Calu3 (cell line): ENCODE measurements at regions of chr11 and their contacts with region 1.

Region 1: DNA sequence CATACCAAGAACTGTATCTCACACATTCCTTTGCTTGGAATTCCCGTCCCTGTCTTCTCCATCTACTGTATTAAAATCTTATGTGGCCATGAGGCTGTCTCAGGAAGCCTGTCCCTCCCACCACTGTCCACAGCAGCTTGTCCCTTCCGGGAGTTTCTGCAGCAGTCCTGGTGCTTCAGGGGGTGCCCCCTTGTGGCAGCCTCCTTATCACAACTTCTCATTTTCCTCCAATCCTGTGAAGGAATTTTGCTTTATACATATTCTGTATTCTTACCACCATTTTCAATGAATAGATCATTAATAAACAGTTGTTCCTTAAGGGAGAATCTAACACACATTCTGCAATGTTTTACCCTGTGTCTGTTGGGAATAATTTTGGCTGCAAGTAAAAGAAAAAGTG is 220.4 kb upstream of the RAG2 start:
- DNase-seq: peak; percentile 89
- H3K4me3 Mint-ChIP-seq: peak overlapping the region; percentile 45
- H3K27ac Mint-ChIP-seq: peak overlapping the region; percentile 79
- H3K4me1 Mint-ChIP-seq: peaks cover 31% of the 10 kb centered on the region
- H3K27me3 Mint-ChIP-seq: no peaks in the 10 kb centered on the region
- CTCF ChIP-seq: peak; percentile 66

Region 2: DNA sequence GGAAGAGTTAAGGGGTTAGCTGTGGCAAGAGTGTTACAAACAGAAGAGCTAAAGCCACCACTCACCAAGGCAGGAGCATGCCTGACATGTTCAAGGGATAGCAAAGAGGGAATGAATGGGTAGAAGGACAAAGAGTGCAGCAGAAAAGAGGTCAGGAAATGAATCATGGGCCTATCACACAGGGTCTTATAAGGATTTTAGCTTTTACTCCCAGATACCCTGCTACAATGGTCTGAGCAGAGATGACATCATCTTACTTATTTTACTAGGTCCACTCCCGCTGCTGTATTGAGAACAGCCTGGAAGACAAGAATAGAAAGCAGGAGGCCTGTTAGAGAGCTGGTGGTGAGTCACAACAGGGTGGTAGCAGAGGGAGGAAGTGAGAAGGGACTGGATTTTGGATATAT is 318.1 kb before region 1 on chr11:
- CTCF ChIA-PET with region 1: no interaction called
- intact Hi-C with region 1: no loop called
- DNase-seq: peak; percentile 47
- H3K4me3 Mint-ChIP-seq: no peak overlapping the region
- H3K27ac Mint-ChIP-seq: peak overlapping the region; percentile 53
- H3K4me1 Mint-ChIP-seq: peaks cover 21% of the 10 kb centered on the region
- H3K27me3 Mint-ChIP-seq: no peaks in the 10 kb centered on the region
- CTCF ChIP-seq: no peak

Region 3: GRCh38 chr11:36638556-36638955 is 179.9 kb before region 1 on chr11:
- CTCF ChIA-PET with region 1: no interaction called
- intact Hi-C with region 1: no loop called
- DNase-seq: no peak
- H3K4me3 Mint-ChIP-seq: no peak overlapping the region
- H3K27ac Mint-ChIP-seq: no peak overlapping the region
- H3K4me1 Mint-ChIP-seq: no peaks in the 10 kb centered on the region
- H3K27me3 Mint-ChIP-seq: no peaks in the 10 kb centered on the region
- CTCF ChIP-seq: no peak

Region 4: GRCh38 chr11:36702330-36703055 is 115.9 kb before region 1 on chr11:
- CTCF ChIA-PET with region 1: interaction called, 13 read pairs
- intact Hi-C with region 1: loop called (anchors 2 kb)
- DNase-seq: peak; percentile 46
- H3K4me3 Mint-ChIP-seq: no peak overlapping the region
- H3K27ac Mint-ChIP-seq: no peak overlapping the region
- H3K4me1 Mint-ChIP-seq: peaks cover 9% of the 10 kb centered on the region
- H3K27me3 Mint-ChIP-seq: peaks cover 5% of the 10 kb centered on the region
- CTCF ChIP-seq: peak; percentile 49

Region 5: DNA sequence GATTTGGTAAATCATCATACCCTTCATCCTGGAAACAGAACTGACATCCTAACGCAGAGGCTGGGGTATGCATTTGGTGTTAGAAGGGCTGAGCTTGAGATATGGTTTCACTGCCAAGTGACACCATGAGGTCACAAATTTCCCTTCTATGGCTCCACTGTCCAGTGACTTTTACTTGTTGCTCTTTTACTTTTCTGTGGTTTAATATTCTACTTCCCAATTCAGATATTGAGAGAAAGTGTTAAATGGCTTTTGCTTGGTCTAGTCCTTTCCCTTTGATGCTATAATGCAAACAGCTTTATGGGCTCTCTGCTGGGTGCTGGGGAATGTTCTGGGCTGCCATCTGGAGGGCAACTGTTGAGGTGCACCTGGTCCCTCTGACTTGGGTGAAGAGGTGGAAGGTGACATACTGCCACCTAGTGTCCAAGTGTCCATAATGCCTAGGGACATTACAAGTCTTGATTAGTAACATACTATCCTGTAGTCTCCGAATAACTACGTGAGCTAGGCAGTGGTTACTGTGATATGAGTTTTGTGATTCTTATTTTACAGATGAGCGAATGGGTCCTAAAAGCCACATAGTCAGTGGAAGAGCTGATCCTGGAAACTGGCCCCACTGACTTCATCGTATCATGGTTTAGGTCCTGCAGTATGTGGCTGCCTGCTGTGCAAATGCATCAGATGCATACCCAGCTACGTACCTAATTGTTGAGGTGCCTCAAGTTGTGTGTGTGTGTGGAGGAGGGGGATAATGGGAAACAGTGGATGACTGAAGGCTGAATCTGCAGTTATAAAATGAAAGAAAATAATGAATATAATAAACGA is 71.3 kb before region 1 on chr11:
- CTCF ChIA-PET with region 1: interaction called, 17 read pairs
- intact Hi-C with region 1: loop called (anchors 2 kb)
- DNase-seq: peak; percentile 91
- H3K4me3 Mint-ChIP-seq: no peak overlapping the region
- H3K27ac Mint-ChIP-seq: no peak overlapping the region
- H3K4me1 Mint-ChIP-seq: peaks cover 11% of the 10 kb centered on the region
- H3K27me3 Mint-ChIP-seq: no peaks in the 10 kb centered on the region
- CTCF ChIP-seq: peak; percentile 95

Region 6: GRCh38 chr11:37504060-37504611 is 685.7 kb after region 1 on chr11:
- CTCF ChIA-PET with region 1: interaction called, 3 read pairs
- intact Hi-C with region 1: loop called (anchors 10 kb)
- DNase-seq: peak; percentile 62
- H3K4me3 Mint-ChIP-seq: peak overlapping the region; percentile 0
- H3K27ac Mint-ChIP-seq: peak overlapping the region; percentile 16
- H3K4me1 Mint-ChIP-seq: peaks cover 51% of the 10 kb centered on the region
- H3K27me3 Mint-ChIP-seq: no peaks in the 10 kb centered on the region
- CTCF ChIP-seq: no peak